CD14-positive monocyte (primary cell): ENCODE measurements at regions of chr21 and their contacts with region 1.

Region 1: GRCh38 chr21:25967573-25968438 is 202.8 kb downstream of the APP start:
- DNase-seq: peak; percentile 79 to 91 (median 87)
- H3K4me3 ChIP-seq: peak overlapping the region in 1 of 3 experiments; percentile 60
- H3K4me3 Mint-ChIP-seq: peak overlapping the region in 1 of 2 donors; percentile 59
- H3K27ac ChIP-seq: peak overlapping the region; percentile 73 to 93
- H3K27ac Mint-ChIP-seq: peak overlapping the region; percentile 80 to 91 (median 86)
- H3K4me1 ChIP-seq: peaks cover 62 to 68% of the 10 kb centered on the region in 2 donors
- H3K4me1 Mint-ChIP-seq: peaks cover 58% of the 10 kb centered on the region
- H3K27me3 ChIP-seq: no peaks in the 10 kb centered on the region
- H3K27me3 Mint-ChIP-seq: no peaks in the 10 kb centered on the region
- CTCF ChIP-seq: no peak

Region 2: GRCh38 chr21:25903602-25904001 is 64.2 kb before region 1 on chr21:
- intact Hi-C with region 1: loop called in 1 of 2 experiments (anchors 5 kb)
- DNase-seq: peak; percentile 83 to 92 (median 89)
- H3K4me3 ChIP-seq: peak overlapping the region in 2 of 3 experiments; percentile 3 to 43
- H3K4me3 Mint-ChIP-seq: peak overlapping the region in 1 of 2 donors; percentile 83
- H3K27ac ChIP-seq: peak overlapping the region; percentile 53 to 79
- H3K27ac Mint-ChIP-seq: peak overlapping the region; percentile 89 to 97 (median 94)
- H3K4me1 ChIP-seq: peaks cover 10 to 15% of the 10 kb centered on the region in 2 donors
- H3K4me1 Mint-ChIP-seq: peaks cover 14% of the 10 kb centered on the region
- H3K27me3 ChIP-seq: no peaks in the 10 kb centered on the region
- H3K27me3 Mint-ChIP-seq: no peaks in the 10 kb centered on the region
- CTCF ChIP-seq: no peak